ENCODE measurements at regions of chr9 and their contacts with region 1.

Region 1: DNA sequence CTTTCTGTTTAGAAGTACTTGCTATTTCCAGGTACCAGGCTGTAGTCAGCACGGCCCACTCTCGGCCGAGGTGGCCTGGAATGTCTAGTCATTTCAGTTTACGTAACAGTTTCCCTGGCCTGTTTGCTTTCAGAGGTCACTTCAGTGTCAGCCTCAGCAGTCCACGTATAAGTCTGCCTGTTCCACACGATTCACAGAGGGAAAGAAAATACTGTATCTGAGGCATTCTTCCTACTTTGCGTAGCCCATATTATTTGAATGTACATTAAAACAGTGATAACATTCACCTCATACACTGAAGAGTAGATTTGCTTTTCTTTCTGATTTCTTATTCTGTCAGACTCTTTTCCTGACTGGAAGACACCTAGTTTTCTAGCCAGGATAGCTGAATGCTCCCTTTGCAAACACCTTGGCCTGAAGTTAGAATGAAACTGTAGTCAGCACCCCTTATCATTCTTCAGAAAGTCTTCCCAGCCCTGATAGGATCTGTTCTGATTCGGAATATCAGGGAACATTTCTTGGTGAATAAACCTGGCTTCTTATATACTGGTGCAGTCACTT is 140.9 kb downstream of the AOPEP start:
- DNase-seq: peak; percentile 87 to 99
- ATAC-seq: peak; percentile 86 to 94
- H3K4me3 ChIP-seq: no peak overlapping the region
- H3K27ac ChIP-seq: peak overlapping the region; percentile 94 to 97
- H3K4me1 ChIP-seq: peaks cover 83% of the 10 kb centered on the region
- CTCF ChIP-seq: no peak
- EP300 ChIP-seq: peak; percentile 95 to 97
- POLR2A ChIP-seq: no peak
- RAD21 ChIP-seq: peak; percentile 60 to 70

Region 2: DNA sequence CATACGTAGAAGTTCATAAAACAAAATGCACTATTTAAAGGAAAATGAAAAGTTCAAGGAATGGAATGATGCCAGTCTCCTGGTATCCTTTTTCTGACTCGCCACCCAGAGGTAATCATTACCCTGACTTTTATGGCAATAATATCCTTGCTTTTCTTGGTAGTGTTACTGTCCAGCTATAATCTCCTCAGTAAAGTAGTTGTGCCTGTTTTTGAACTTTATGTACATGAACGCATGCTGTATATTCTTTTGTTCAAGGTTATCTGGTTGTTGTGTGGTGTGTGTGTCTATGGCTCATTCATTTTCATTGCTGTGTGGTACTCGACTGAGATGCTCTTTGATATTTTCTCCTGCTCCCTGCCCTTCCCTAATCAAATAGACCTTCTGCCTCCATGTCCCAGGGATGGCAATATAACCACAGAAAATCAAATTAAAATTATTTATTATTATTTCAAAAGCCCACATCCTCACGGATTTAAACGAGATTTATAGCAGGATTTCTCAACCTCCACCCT is 198.9 kb before region 1 on chr9:
- CTCF ChIA-PET with region 1: no interaction called
- POLR2A ChIA-PET with region 1: no interaction called
- DNase-seq: no peak
- ATAC-seq: peak; percentile 32 to 45; a peak in 4 of 6 replicates
- H3K4me3 ChIP-seq: no peak overlapping the region
- H3K27ac ChIP-seq: peak overlapping the region; percentile 32 to 43; a peak in 5 of 6 replicates
- H3K4me1 ChIP-seq: peaks cover 16% of the 10 kb centered on the region; the same call in 2 of the 3 replicates
- CTCF ChIP-seq: no peak
- EP300 ChIP-seq: no peak
- POLR2A ChIP-seq: no peak
- RAD21 ChIP-seq: no peak

Region 3: GRCh38 chr9:94805585-94805984 is 61.8 kb before region 1 on chr9:
- CTCF ChIA-PET with region 1: no interaction called
- POLR2A ChIA-PET with region 1: interaction called, 20 read pairs
- DNase-seq: peak; percentile 82 to 99
- ATAC-seq: peak; percentile 87 to 94
- H3K4me3 ChIP-seq: no peak overlapping the region; the same call in 2 of the 3 replicates
- H3K27ac ChIP-seq: peak overlapping the region; percentile 92
- H3K4me1 ChIP-seq: peaks cover 90% of the 10 kb centered on the region
- CTCF ChIP-seq: no peak
- EP300 ChIP-seq: peak; percentile 95
- POLR2A ChIP-seq: no peak
- RAD21 ChIP-seq: peak; percentile 39 to 65

Region 4: DNA sequence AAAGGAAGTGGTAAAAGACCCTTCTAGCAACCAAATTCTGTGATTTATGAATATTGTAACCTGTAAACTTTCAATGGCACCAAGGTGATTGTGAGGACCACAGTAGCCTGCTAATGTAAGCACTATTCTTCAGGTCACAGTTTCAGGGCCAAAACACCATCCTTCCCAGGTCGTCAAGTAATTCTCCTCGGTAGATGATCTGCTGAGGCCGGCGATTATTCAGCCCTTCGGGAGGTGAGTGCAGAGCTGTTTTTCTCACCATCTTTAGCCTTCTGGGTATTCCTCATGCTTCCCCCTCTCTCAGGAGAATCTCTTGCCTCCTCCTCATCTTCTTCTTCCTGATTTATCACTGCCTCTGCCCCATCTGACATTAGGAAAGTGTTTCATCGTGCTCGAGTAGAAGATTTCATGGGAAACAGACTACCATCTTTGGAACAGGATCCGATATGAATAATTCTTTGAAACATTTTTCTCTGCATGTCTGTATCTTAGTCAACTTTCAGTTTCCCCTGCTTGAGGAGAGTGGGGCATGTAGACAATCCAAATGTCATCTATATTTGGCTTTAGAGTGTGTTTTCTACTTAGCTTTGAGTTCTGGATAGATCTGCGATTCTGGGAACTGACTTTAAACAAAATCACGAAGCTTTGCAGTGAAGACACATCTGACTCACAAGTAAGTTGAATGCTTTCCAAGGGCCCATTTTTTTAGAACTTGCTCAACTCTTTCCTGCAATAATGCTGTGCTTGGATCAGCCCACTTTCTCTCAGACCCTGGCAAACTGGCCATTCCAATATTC is 33.1 kb after region 1 on chr9:
- CTCF ChIA-PET with region 1: interaction called, 6 read pairs
- POLR2A ChIA-PET with region 1: interaction called, 36 read pairs
- DNase-seq: peak in 1 of 2 experiments; percentile 83
- ATAC-seq: peak; percentile 73 to 81
- H3K4me3 ChIP-seq: peak overlapping the region; percentile 24
- H3K27ac ChIP-seq: peak overlapping the region; percentile 97 to 99
- H3K4me1 ChIP-seq: peaks cover 90% of the 10 kb centered on the region
- CTCF ChIP-seq: no peak
- EP300 ChIP-seq: peak; percentile 56 to 78; a peak in 1 of 5 replicates
- POLR2A ChIP-seq: no peak
- RAD21 ChIP-seq: no peak; a peak in 1 of 5 replicates

Region 5: GRCh38 chr9:94912700-94913249 is 45.4 kb after region 1 on chr9:
- CTCF ChIA-PET with region 1: interaction called, 12 read pairs
- POLR2A ChIA-PET with region 1: interaction called, 32 read pairs
- DNase-seq: peak; percentile 73 to 93
- ATAC-seq: peak; percentile 28 to 47
- H3K4me3 ChIP-seq: no peak overlapping the region
- H3K27ac ChIP-seq: peak overlapping the region; percentile 97 to 99
- H3K4me1 ChIP-seq: peaks cover 96% of the 10 kb centered on the region
- CTCF ChIP-seq: no peak
- EP300 ChIP-seq: peak; percentile 72 to 92; a peak in 3 of 5 replicates
- POLR2A ChIP-seq: no peak
- RAD21 ChIP-seq: peak; percentile 42 to 58; a peak in 4 of 5 replicates

Region 6: GRCh38 chr9:94922098-94922607 is 54.8 kb after region 1 on chr9:
- CTCF ChIA-PET with region 1: interaction called, 3 read pairs
- POLR2A ChIA-PET with region 1: interaction called, 27 read pairs
- DNase-seq: peak in 1 of 2 experiments; percentile 93
- ATAC-seq: peak; percentile 42 to 59; a peak in 5 of 6 replicates
- H3K4me3 ChIP-seq: peak overlapping the region; percentile 27
- H3K27ac ChIP-seq: peak overlapping the region; percentile 97 to 99
- H3K4me1 ChIP-seq: peaks cover 90% of the 10 kb centered on the region
- CTCF ChIP-seq: no peak
- EP300 ChIP-seq: peak; percentile 79 to 90; a peak in 3 of 5 replicates
- POLR2A ChIP-seq: no peak
- RAD21 ChIP-seq: peak; percentile 39 to 54; a peak in 3 of 5 replicates

Region 7: DNA sequence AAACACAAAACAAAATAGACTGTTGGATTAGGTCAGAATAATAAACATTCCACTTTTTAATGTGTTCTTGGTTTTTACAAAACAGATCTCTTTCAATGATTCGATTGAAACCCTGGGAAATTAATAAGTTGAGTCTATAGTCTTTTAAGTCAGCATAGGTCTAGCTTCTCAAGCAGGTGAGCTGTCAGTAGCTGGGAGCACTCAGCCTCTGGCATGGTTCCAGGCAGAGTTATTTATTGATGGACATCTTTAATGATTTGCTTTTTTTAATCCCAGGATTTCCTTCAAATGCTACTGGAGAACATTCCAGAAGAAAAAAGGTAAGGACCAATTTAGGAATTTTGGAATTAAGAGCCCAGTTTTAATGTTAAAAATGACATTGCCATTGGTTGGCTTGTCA is 100.1 kb after region 1 on chr9:
- CTCF ChIA-PET with region 1: no interaction called
- POLR2A ChIA-PET with region 1: no interaction called
- DNase-seq: peak in 1 of 2 experiments; percentile 17
- ATAC-seq: no peak
- H3K4me3 ChIP-seq: no peak overlapping the region
- H3K27ac ChIP-seq: peak overlapping the region in 1 of 2 experiments; percentile 55; a peak in 3 of 6 replicates
- H3K4me1 ChIP-seq: peaks cover 18% of the 10 kb centered on the region
- CTCF ChIP-seq: no peak
- EP300 ChIP-seq: no peak
- POLR2A ChIP-seq: no peak
- RAD21 ChIP-seq: no peak

Region 8: GRCh38 chr9:94980947-94981722 is 113.8 kb after region 1 on chr9:
- CTCF ChIA-PET with region 1: no interaction called
- POLR2A ChIA-PET with region 1: no interaction called
- DNase-seq: no peak
- ATAC-seq: peak in 1 of 2 experiments; percentile 43; a peak in 1 of 6 replicates
- H3K4me3 ChIP-seq: no peak overlapping the region
- H3K27ac ChIP-seq: peak overlapping the region in 1 of 2 experiments; percentile 28; a peak in 2 of 6 replicates
- H3K4me1 ChIP-seq: no peaks in the 10 kb centered on the region
- CTCF ChIP-seq: no peak
- EP300 ChIP-seq: no peak
- POLR2A ChIP-seq: no peak
- RAD21 ChIP-seq: no peak

Region 9: GRCh38 chr9:95012035-95012708 is 144.8 kb after region 1 on chr9:
- CTCF ChIA-PET with region 1: interaction called, 4 read pairs
- POLR2A ChIA-PET with region 1: interaction called, 11 read pairs
- DNase-seq: no peak
- ATAC-seq: no peak
- H3K4me3 ChIP-seq: peak overlapping the region; percentile 2; the same call in 1 of the 3 replicates
- H3K27ac ChIP-seq: peak overlapping the region; percentile 80 to 99
- H3K4me1 ChIP-seq: peaks cover 87% of the 10 kb centered on the region
- CTCF ChIP-seq: no peak
- EP300 ChIP-seq: no peak
- POLR2A ChIP-seq: no peak
- RAD21 ChIP-seq: no peak